ENCODE measurements at regions of chr3 and their contacts with region 1.

Region 1: DNA sequence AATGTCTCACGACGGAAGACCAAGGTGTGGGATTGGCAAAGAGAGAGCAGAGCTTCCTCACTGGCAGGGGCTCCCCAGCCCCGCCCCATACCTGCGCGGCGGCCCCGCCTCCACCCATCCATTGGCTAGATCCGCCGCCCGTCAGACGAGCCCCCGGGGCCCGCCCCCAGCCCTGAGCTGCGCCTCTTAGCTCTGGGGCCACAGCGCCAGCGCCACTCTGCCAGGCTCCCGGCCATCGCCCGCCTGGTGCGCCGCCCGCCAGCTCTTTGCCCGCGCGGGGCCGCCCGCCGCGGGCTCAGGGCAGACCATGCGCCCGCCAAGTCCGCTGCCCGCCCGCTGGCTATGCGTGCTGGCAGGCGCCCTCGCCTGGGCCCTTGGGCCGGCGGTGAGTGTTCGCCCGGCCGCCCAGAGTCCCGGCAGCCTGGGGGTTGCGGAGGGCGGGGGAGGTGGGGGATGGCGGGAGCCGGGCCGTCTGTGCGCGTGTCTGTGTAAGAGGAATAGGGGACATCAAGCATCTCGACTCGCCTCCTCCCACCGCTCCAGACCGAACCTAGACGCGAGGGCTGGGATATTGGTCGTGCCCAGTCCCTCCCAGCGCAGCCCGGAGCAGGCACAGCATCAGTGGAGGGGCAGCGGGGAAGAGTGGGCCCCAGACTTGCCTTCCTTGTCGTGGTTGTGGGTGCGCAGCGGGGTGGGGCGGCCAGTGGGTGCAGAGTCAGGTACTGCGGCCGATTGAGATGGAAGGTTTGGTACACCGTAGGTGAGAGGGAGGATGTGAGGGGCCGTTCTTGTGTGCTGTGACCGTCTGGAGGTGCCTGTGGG is at the start of gene VIPR1:
- DNase-seq: peak; percentile 73
- ATAC-seq: peak; percentile 95
- H3K4me3 ChIP-seq: peak within 1 kb of the TSS; percentile 52 to 63
- H3K27ac ChIP-seq: peak within 1 kb of the TSS; percentile 11; the same call in 1 of the 2 replicates
- H3K4me1 ChIP-seq: peaks cover 17 to 66% of the 10 kb centered on the region in 2 experiments
- H3K27me3 ChIP-seq: no peaks in the 10 kb centered on the region
- CTCF ChIP-seq: no peak
- POLR2A ChIP-seq: peak; percentile 64
- RAD21 ChIP-seq: no peak
- total RNA-seq, gene VIPR1: 9.6 TPM

Region 2: GRCh38 chr3:42490243-42490642 is 12.4 kb before region 1 on chr3:
- CTCF ChIA-PET with region 1: no interaction called
- POLR2A ChIA-PET with region 1: interaction called, 13 read pairs
- RAD21 ChIA-PET with region 1: no interaction called
- intact Hi-C with region 1: no loop called
- DNase-seq: peak; percentile 59
- ATAC-seq: peak; percentile 92
- H3K4me3 ChIP-seq: peak overlapping the region in 1 of 2 experiments; percentile 45; a peak in 2 of 4 replicates
- H3K27ac ChIP-seq: peak overlapping the region; percentile 76
- H3K4me1 ChIP-seq: peaks cover 24 to 54% of the 10 kb centered on the region in 2 experiments
- H3K27me3 ChIP-seq: no peaks in the 10 kb centered on the region
- CTCF ChIP-seq: no peak
- POLR2A ChIP-seq: no peak
- RAD21 ChIP-seq: peak; percentile 24